ENCODE measurements at regions of chr11 and their contacts with region 1.

Region 1: GRCh38 chr11:124875943-124876817 is 10.9 kb downstream of the ROBO3 start:
- DNase-seq: peak; percentile 97
- H3K4me3 ChIP-seq: peak overlapping the region; percentile 14 to 49 (median 47)
- H3K27ac ChIP-seq: peak overlapping the region; percentile 65
- H3K4me1 ChIP-seq: peaks cover 21% of the 10 kb centered on the region
- H3K27me3 ChIP-seq: peaks cover 21 to 26% of the 10 kb centered on the region in 2 experiments
- CTCF ChIP-seq: peak; percentile 63 to 74
- POLR2A ChIP-seq: no peak

Region 2: DNA sequence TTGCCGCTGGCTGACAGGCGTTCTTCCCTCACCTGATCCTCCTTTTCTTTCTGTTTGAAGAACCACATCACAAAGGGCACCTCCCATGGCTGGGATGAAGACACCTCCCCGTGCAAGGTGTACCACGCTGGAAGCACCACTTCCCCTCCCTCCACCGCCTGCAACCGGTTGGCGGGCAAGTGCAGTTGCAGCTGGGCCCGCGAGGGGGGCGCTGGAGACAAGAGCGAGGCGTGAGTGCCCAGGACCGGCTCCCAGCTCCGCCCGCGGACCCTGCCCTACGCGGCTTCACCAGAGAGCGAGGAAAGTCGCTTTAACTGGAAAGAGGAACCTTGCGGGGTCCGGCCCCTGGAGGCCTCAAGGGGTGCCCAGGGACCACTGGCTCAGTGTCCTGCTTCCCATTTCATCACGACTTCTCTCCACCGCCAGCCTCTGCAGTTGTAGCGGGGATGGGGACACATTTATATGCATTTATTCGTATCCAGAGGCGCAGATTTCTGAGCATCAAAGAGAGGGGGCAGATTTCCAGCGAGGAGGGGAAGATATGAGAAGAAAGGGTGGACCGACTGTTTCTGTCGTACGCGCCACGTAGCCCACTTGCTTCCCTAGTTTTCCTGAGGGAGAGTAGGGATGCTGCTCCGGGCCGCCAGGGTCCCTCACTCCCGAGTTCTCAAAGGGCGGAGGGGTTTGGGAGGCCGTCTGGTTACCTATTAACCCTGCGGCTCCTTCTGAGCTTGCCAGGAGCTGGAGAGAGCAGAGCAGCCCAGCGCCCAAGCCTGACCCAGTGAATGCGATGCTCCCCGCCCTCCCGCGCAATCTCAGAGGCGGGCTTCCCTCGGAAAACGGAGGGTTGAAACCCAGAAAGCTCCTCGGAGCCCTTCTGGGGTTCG is 117.6 kb before region 1 on chr11:
- CTCF ChIA-PET with region 1: interaction called, 13 read pairs
- POLR2A ChIA-PET with region 1: interaction called, 3 read pairs
- dilution Hi-C with region 1: no loop called
- intact Hi-C with region 1: no loop called
- DNase-seq: peak; percentile 81
- H3K4me3 ChIP-seq: peak overlapping the region; percentile 23 to 65 (median 36)
- H3K27ac ChIP-seq: peak overlapping the region; percentile 97
- H3K4me1 ChIP-seq: peaks cover 65% of the 10 kb centered on the region
- H3K27me3 ChIP-seq: no peaks in the 10 kb centered on the region
- CTCF ChIP-seq: peak; percentile 73 to 91
- POLR2A ChIP-seq: peak; percentile 42

Region 3: GRCh38 chr11:124920870-124921609 is 44.9 kb after region 1 on chr11:
- CTCF ChIA-PET with region 1: interaction called, 7 read pairs
- POLR2A ChIA-PET with region 1: interaction called, 4 read pairs
- dilution Hi-C with region 1: no loop called
- intact Hi-C with region 1: loop called (anchors 1 kb)
- DNase-seq: peak; percentile 82
- H3K4me3 ChIP-seq: peak overlapping the region in 2 of 3 experiments; percentile 31 to 39
- H3K27ac ChIP-seq: peak overlapping the region; percentile 22
- H3K4me1 ChIP-seq: peaks cover 9% of the 10 kb centered on the region
- H3K27me3 ChIP-seq: no peaks in the 10 kb centered on the region
- CTCF ChIP-seq: no peak
- POLR2A ChIP-seq: peak; percentile 62

Region 4: DNA sequence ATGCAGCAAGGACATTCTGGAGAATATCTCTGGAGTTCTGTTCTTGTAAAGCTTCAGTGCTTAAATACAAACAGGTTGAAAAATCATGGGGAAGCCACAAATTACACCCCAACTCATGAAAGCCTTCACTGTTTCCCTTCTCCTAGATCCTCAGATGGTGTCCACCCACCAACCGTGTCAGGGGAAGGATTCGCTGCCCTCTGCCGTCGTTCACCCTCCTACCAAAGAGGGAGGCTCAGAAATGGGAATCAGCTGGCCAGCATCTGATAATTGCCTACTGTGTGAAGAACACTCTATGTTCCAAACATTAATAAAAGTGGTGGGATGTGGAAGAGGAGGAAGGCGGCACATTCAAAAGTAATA is 67.1 kb after region 1 on chr11:
- CTCF ChIA-PET with region 1: interaction called, 12 read pairs
- POLR2A ChIA-PET with region 1: no interaction called
- dilution Hi-C with region 1: no loop called
- intact Hi-C with region 1: no loop called
- DNase-seq: no peak
- H3K4me3 ChIP-seq: no peak overlapping the region
- H3K27ac ChIP-seq: no peak overlapping the region
- H3K4me1 ChIP-seq: no peaks in the 10 kb centered on the region
- H3K27me3 ChIP-seq: no peaks in the 10 kb centered on the region
- CTCF ChIP-seq: peak in 1 of 2 donors; percentile 5
- POLR2A ChIP-seq: no peak

Region 5: GRCh38 chr11:125111343-125112207 is 235.4 kb after region 1 on chr11 and contains the start of gene TMEM218:
- CTCF ChIA-PET with region 1: no interaction called
- POLR2A ChIA-PET with region 1: interaction called, 3 read pairs
- dilution Hi-C with region 1: no loop called
- intact Hi-C with region 1: loop called (anchors 2 kb)
- DNase-seq: peak; percentile 100
- H3K4me3 ChIP-seq: peak within 1 kb of the TSS; percentile 57 to 85 (median 72)
- H3K27ac ChIP-seq: peak within 1 kb of the TSS; percentile 10
- H3K4me1 ChIP-seq: peaks cover 6% of the 10 kb centered on the region
- H3K27me3 ChIP-seq: peaks cover 0 to 1% of the 10 kb centered on the region in 2 experiments
- CTCF ChIP-seq: no peak
- POLR2A ChIP-seq: no peak
- total RNA-seq, gene TMEM218: 17.9 and 23.8 TPM in 2 replicates